GM13976 (cell line): ENCODE measurements at regions of chr4 and their contacts with region 1.

Region 1: GRCh38 chr4:176377780-176378179 is 58.0 kb downstream of the SPCS3 start:
- DNase-seq: peak; percentile 37
- CTCF ChIP-seq: peak; percentile 45

Region 2: GRCh38 chr4:176642472-176642871 is 264.7 kb after region 1 on chr4:
- in situ Hi-C with region 1: loop called (anchors 10 kb)
- DNase-seq: peak; percentile 20
- CTCF ChIP-seq: no peak

Region 3: GRCh38 chr4:177047070-177047850 is 669.5 kb after region 1 on chr4:
- in situ Hi-C with region 1: loop called (anchors 10 kb)
- DNase-seq: peak; percentile 41
- CTCF ChIP-seq: peak; percentile 78